ENCODE measurements at regions of chr1 and their contacts with region 1.

Region 1: GRCh38 chr1:28779751-28780408 is 32.1 kb upstream of the OPRD1 start:
- DNase-seq: no peak
- ATAC-seq: no peak
- H3K4me3 ChIP-seq: no peak overlapping the region
- H3K27ac ChIP-seq: peak overlapping the region in 1 of 2 donors; percentile 55
- H3K4me1 ChIP-seq: peaks cover 2 to 17% of the 10 kb centered on the region in 2 donors
- H3K27me3 ChIP-seq: no peaks in the 10 kb centered on the region
- CTCF ChIP-seq: no peak

Region 2: GRCh38 chr1:28871631-28872401 is 91.9 kb after region 1 on chr1:
- intact Hi-C with region 1: loop called (anchors 5 to 10 kb)
- DNase-seq: no peak
- ATAC-seq: peak; percentile 17
- H3K4me3 ChIP-seq: no peak overlapping the region
- H3K27ac ChIP-seq: no peak overlapping the region
- H3K4me1 ChIP-seq: no peaks in the 10 kb centered on the region
- H3K27me3 ChIP-seq: no peaks in the 10 kb centered on the region
- CTCF ChIP-seq: no peak

Region 3: DNA sequence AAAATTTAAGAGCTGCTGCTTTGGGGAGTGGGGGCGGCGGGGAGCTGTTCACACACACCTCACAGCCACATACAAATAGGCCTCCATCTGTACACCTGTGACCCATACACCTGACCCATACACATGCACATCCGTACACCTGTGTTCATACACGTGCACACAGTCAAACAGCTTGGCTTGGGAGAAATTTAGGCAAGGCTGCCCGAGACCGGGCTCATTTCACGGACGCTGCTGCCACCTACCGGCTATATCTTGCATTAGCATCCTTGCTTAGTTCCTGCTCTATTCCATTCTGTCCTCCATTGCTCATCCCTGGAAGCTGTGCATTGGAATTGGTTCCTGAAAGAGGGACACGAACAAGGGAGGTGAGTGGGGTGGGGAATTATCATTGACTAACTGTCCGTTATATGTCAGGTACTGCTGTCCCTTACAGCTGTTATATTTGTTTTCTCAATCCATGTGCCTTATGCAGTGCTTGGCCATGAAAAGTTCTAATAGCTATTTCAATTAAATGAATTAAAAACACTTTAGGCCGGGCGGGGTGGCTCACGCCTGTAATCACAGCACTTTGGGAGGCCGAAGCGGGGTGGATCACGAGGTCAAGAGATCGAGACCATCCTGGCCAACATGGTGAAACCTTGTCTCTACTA is 97.4 kb after region 1 on chr1:
- intact Hi-C with region 1: loop called (anchors 5 to 10 kb)
- DNase-seq: peak; percentile 71 to 88 (median 79)
- ATAC-seq: peak; percentile 89
- H3K4me3 ChIP-seq: no peak overlapping the region
- H3K27ac ChIP-seq: no peak overlapping the region
- H3K4me1 ChIP-seq: peaks cover 0 to 5% of the 10 kb centered on the region in 2 donors
- H3K27me3 ChIP-seq: no peaks in the 10 kb centered on the region
- CTCF ChIP-seq: peak; percentile 87 to 96

Region 4: DNA sequence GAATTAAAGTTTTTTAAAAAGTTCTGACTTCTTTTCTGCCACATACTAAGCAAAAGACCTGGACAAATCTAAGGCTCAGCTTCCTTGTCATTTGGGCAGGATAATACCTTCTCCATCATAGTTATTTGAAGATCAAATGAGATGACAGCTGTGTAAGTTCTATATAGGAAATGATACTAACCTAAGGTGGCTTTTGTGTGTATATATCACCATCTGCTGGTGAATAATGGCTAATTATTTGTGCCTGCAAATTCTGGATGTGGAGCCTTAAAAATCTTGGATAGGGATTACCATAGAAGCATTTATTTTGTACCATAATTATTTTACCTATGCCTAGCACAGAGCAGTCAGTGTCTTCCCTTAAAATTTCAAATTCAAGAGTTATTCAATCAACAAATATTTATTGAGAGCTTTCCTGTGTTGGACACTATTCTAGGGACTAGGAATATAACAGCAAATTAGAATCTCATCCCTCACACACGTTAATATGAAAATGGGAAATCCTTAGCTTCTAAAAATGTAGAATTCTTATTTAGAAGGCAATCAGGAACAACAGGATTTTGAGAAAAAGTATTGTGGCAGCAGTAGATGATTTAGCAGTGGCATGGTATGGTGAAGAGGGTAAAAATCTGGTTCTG is 254.1 kb after region 1 on chr1:
- intact Hi-C with region 1: loop called in 1 of 2 experiments (anchors 10 kb)
- DNase-seq: peak in 2 of 4 donors; percentile 44 to 49
- ATAC-seq: peak; percentile 77
- H3K4me3 ChIP-seq: no peak overlapping the region
- H3K27ac ChIP-seq: no peak overlapping the region
- H3K4me1 ChIP-seq: no peaks in the 10 kb centered on the region
- H3K27me3 ChIP-seq: no peaks in the 10 kb centered on the region
- CTCF ChIP-seq: peak; percentile 48 to 62

Measured in left lung (tissue), 14 donors.